Sigmoid colon (tissue), 7 donors: ENCODE measurements at regions of chr1 and their contacts with region 1.

Region 1: GRCh38 chr1:63773815-63774616 is at the start of gene ROR1:
- DNase-seq: peak; percentile 96
- H3K4me3 ChIP-seq: peak within 1 kb of the TSS; percentile 76 to 89 (median 88)
- H3K27ac ChIP-seq: peak within 1 kb of the TSS; percentile 86 to 96 (median 92)
- H3K4me1 ChIP-seq: peaks cover 0 to 48% (median 29%) of the 10 kb centered on the region in 4 donors
- H3K27me3 ChIP-seq: no peaks in the 10 kb centered on the region
- CTCF ChIP-seq: peak; percentile 72 to 81 (median 76)
- EP300 ChIP-seq: no peak
- POLR2A ChIP-seq: peak; percentile 30 to 44
- total RNA-seq, gene ROR1: 27.3 to 37.1 (median 29.3) TPM

Region 2: GRCh38 chr1:63615768-63616420 is 158.1 kb before region 1 on chr1:
- intact Hi-C with region 1: loop called (anchors 5 kb)
- DNase-seq: peak; percentile 73
- H3K4me3 ChIP-seq: no peak overlapping the region
- H3K27ac ChIP-seq: no peak overlapping the region
- H3K4me1 ChIP-seq: peaks cover 0 to 17% (median 4%) of the 10 kb centered on the region in 4 donors
- H3K27me3 ChIP-seq: no peaks in the 10 kb centered on the region
- CTCF ChIP-seq: peak; percentile 48 to 77 (median 72)
- EP300 ChIP-seq: no peak
- POLR2A ChIP-seq: no peak

Region 3: GRCh38 chr1:63874278-63874880 is 100.4 kb after region 1 on chr1:
- intact Hi-C with region 1: loop called (anchors 2 kb)
- DNase-seq: no peak
- H3K4me3 ChIP-seq: no peak overlapping the region
- H3K27ac ChIP-seq: peak overlapping the region in 3 of 4 donors; percentile 41 to 69 (median 62)
- H3K4me1 ChIP-seq: peaks cover 0 to 85% (median 58%) of the 10 kb centered on the region in 4 donors
- H3K27me3 ChIP-seq: no peaks in the 10 kb centered on the region
- CTCF ChIP-seq: no peak
- EP300 ChIP-seq: no peak
- POLR2A ChIP-seq: no peak

Region 4: DNA sequence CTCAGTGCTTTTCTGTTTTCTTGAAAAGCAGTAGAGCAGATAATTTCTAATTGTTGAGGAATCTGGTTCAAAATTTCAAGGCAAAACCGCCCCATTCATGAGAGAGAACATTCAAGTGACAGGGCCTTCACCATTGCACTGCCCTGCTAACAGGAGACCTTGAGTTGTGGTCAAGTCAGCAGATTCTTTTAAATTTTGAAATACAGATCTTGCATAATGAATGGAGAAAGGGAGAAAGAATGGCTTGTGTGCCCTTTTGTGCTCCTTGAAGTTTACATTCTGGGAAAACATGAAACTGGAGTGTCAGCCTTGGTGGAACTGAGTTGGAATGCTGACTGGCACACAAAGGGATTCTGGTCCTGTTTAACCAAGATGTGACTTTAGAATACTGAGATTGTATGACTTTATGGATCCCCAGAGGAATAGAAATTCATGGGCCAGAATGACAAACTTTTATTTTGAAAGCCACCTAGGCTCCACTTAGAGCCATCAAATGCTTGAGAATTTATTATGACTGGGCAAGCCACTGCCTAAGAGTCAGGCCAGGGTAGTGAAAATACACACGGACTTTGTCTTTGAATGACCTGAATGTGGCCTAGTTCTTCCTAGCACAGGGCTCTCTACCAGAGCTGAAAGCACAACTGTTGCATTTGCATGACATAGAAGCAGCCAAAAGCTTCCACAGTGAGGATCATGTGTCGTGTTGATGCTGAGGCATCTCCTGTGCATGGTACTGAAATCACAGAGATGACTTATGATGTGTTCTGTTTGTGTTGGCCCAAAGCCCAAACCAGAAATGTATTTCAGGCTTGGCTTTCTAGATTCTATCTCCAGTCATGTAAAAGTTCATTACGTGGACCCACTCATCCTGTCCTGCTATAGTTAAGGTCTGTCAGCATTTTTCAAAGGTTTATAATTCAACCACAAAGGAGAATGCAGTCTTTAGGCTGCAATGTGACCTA is 265.2 kb after region 1 on chr1:
- intact Hi-C with region 1: loop called (anchors 10 kb)
- DNase-seq: peak; percentile 77
- H3K4me3 ChIP-seq: no peak overlapping the region
- H3K27ac ChIP-seq: peak overlapping the region in 3 of 4 donors; percentile 44 to 63 (median 52)
- H3K4me1 ChIP-seq: peaks cover 0 to 57% (median 47%) of the 10 kb centered on the region in 4 donors
- H3K27me3 ChIP-seq: no peaks in the 10 kb centered on the region
- CTCF ChIP-seq: no peak
- EP300 ChIP-seq: no peak
- POLR2A ChIP-seq: no peak

Region 5: GRCh38 chr1:64242895-64243756 is 469.1 kb after region 1 on chr1:
- intact Hi-C with region 1: loop called (anchors 5 kb)
- DNase-seq: no peak
- H3K4me3 ChIP-seq: no peak overlapping the region
- H3K27ac ChIP-seq: no peak overlapping the region
- H3K4me1 ChIP-seq: peaks cover 0 to 3% (median 0%) of the 10 kb centered on the region in 4 donors
- H3K27me3 ChIP-seq: no peaks in the 10 kb centered on the region
- CTCF ChIP-seq: peak in 3 of 4 experiments; percentile 29 to 62 (median 45)
- EP300 ChIP-seq: no peak
- POLR2A ChIP-seq: no peak